ENCODE measurements at regions of chr11 and their contacts with region 1.

Region 1: GRCh38 chr11:128522055-128522942 is 65.1 kb downstream of the ETS1 start:
- DNase-seq: peak; percentile 91
- H3K4me3 ChIP-seq: peak overlapping the region; percentile 67
- H3K4me3 Mint-ChIP-seq: peak overlapping the region; percentile 79
- H3K27ac Mint-ChIP-seq: peak overlapping the region; percentile 67
- H3K4me1 ChIP-seq: peaks cover 7% of the 10 kb centered on the region; the same call in 1 of the 2 replicates
- H3K4me1 Mint-ChIP-seq: peaks cover 9% of the 10 kb centered on the region
- H3K27me3 ChIP-seq: peaks cover 1% of the 10 kb centered on the region; the same call in 1 of the 2 replicates
- H3K27me3 Mint-ChIP-seq: peaks cover 36% of the 10 kb centered on the region
- CTCF ChIP-seq: no peak

Region 2: DNA sequence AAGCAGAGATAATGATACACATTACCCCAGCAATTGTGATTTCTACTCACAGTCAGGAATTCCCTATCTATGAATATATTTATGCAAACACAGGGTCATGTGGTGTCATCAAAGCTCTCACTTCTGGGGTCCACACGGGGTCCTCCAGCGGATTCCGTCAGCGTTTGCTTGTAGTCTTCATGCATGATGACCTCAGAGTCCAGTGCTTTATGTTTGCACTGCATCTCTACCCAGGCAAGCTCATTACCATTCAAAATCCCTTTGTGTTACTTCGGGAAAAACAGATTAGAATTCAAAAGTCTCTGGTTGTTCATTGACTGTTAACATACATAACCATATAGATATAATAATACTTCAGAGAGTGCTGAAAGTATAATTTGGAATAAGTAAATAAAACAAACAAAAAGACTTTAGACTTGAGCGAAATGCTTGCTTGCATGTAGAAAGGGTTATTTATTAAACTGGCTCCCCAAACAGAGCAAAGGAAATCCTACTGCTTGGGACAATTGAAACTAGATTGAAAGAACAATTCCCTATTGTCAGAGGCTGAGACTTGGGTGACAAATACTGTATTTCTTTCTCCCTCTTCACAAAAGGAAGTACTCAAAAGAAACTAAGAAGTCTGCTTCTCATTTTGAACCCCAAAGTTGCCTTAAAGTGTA is 358.1 kb before region 1 on chr11:
- CTCF ChIA-PET with region 1: no interaction called
- POLR2A ChIA-PET with region 1: no interaction called
- intact Hi-C with region 1: loop called (anchors 1 kb)
- DNase-seq: no peak
- H3K4me3 ChIP-seq: no peak overlapping the region
- H3K4me3 Mint-ChIP-seq: no peak overlapping the region
- H3K27ac Mint-ChIP-seq: no peak overlapping the region
- H3K4me1 ChIP-seq: peaks cover 7% of the 10 kb centered on the region; the same call in 1 of the 2 replicates
- H3K4me1 Mint-ChIP-seq: no peaks in the 10 kb centered on the region
- H3K27me3 ChIP-seq: no peaks in the 10 kb centered on the region
- H3K27me3 Mint-ChIP-seq: peaks cover 11% of the 10 kb centered on the region
- CTCF ChIP-seq: no peak

Region 3: GRCh38 chr11:128506999-128507611 is 15.2 kb before region 1 on chr11:
- CTCF ChIA-PET with region 1: no interaction called
- POLR2A ChIA-PET with region 1: no interaction called
- intact Hi-C with region 1: loop called (anchors 1 kb)
- DNase-seq: peak; percentile 37 to 58
- H3K4me3 ChIP-seq: no peak overlapping the region
- H3K4me3 Mint-ChIP-seq: peak overlapping the region; percentile 32
- H3K27ac Mint-ChIP-seq: peak overlapping the region; percentile 42
- H3K4me1 ChIP-seq: no peaks in the 10 kb centered on the region; the same call in 1 of the 2 replicates
- H3K4me1 Mint-ChIP-seq: peaks cover 9% of the 10 kb centered on the region
- H3K27me3 ChIP-seq: no peaks in the 10 kb centered on the region
- H3K27me3 Mint-ChIP-seq: no peaks in the 10 kb centered on the region
- CTCF ChIP-seq: no peak

Measured in Caco-2 (cell line).